ENCODE measurements at regions of chr13 and their contacts with region 1.

Region 1: GRCh38 chr13:104967836-104968630 is 1567.4 kb downstream of the EFNB2 start:
- DNase-seq: no peak
- ATAC-seq: no peak
- H3K4me3 ChIP-seq: no peak overlapping the region
- H3K27ac ChIP-seq: no peak overlapping the region
- H3K4me1 ChIP-seq: no peaks in the 10 kb centered on the region
- H3K27me3 ChIP-seq: no peaks in the 10 kb centered on the region
- CTCF ChIP-seq: no peak
- POLR2A ChIP-seq: no peak
- RAD21 ChIP-seq: no peak

Region 2: DNA sequence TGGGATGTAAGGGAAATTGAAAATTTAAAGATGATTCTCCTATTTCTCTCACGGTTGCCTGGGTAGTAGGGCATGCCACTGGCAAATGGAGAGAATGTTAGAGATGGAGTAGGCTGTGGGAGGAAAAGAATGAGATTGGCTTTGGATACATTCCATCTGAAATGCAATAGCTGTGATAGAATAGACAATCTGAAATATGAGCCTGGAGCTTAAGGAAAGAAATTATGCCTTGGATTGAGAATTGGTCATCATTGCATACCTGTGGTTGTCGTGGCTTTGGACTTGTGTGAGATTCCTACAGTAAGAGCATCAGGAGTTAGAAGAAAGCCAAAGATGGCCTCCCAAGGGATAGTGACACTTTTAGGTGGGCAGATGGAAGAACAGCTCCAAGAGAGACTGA is 1596.8 kb before region 1 on chr13:
- CTCF ChIA-PET with region 1: no interaction called
- POLR2A ChIA-PET with region 1: no interaction called
- dilution Hi-C with region 1: no loop called
- in situ Hi-C with region 1: no loop called
- intact Hi-C with region 1: loop called (anchors 10 kb)
- DNase-seq: no peak
- ATAC-seq: no peak
- H3K4me3 ChIP-seq: no peak overlapping the region
- H3K27ac ChIP-seq: no peak overlapping the region
- H3K4me1 ChIP-seq: no peaks in the 10 kb centered on the region
- H3K27me3 ChIP-seq: no peaks in the 10 kb centered on the region
- CTCF ChIP-seq: no peak
- POLR2A ChIP-seq: no peak
- RAD21 ChIP-seq: no peak

Region 3: DNA sequence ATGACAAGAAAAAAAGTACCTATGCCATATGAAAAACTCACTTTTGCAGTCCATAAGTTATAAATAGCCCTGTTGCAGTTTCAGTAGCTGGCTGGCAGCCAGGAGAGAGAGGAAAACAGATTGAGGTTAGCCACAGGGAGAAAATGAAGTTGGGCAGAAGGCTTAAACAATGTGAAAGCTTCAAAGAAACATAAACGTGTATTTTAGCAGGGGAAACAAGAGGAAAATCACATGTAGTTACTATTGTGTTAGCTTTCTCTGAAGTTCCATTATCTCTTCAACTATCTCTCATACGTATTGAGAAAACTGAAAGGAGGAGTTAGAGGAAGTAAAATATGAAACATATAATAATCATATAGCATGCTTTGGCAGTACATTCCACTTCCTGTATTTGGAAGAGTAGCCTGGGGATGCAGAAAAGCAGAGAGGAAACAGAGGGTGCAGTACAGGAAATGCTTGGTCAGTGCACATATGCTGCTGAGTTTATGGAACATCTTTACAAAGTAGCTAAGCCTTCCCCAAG is 16.3 kb after region 1 on chr13:
- CTCF ChIA-PET with region 1: no interaction called
- POLR2A ChIA-PET with region 1: no interaction called
- dilution Hi-C with region 1: no loop called
- in situ Hi-C with region 1: no loop called
- intact Hi-C with region 1: no loop called
- DNase-seq: peak; percentile 12
- ATAC-seq: no peak
- H3K4me3 ChIP-seq: no peak overlapping the region
- H3K27ac ChIP-seq: no peak overlapping the region
- H3K4me1 ChIP-seq: no peaks in the 10 kb centered on the region
- H3K27me3 ChIP-seq: no peaks in the 10 kb centered on the region
- CTCF ChIP-seq: no peak
- POLR2A ChIP-seq: no peak
- RAD21 ChIP-seq: no peak

Region 4: GRCh38 chr13:105587786-105588185 is 619.8 kb after region 1 on chr13:
- CTCF ChIA-PET with region 1: no interaction called
- POLR2A ChIA-PET with region 1: no interaction called
- dilution Hi-C with region 1: no loop called
- in situ Hi-C with region 1: no loop called
- intact Hi-C with region 1: no loop called
- DNase-seq: peak; percentile 2
- ATAC-seq: no peak
- H3K4me3 ChIP-seq: no peak overlapping the region
- H3K27ac ChIP-seq: no peak overlapping the region
- H3K4me1 ChIP-seq: no peaks in the 10 kb centered on the region
- H3K27me3 ChIP-seq: no peaks in the 10 kb centered on the region
- CTCF ChIP-seq: no peak
- POLR2A ChIP-seq: no peak
- RAD21 ChIP-seq: no peak

Region 5: DNA sequence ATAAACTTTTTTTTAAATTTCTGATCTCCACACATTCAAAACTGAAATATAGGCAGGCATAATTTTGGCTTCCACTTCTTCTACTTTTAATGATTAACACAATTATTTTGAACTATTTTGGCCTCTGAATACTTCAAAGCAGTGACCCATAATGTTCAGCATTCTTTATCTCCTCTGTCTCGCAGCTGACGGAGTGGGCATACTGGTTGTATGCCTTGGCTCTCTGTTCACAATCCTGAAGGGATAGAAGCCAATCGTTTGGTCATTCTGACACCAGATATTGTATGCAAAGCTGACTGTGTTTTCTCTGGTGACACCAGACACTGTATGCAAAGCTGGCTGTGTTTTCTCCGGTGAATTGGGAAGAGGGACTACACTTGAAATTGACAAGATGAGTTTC is 734.4 kb after region 1 on chr13:
- CTCF ChIA-PET with region 1: no interaction called
- POLR2A ChIA-PET with region 1: no interaction called
- dilution Hi-C with region 1: no loop called
- in situ Hi-C with region 1: no loop called
- intact Hi-C with region 1: no loop called
- DNase-seq: no peak
- ATAC-seq: no peak
- H3K4me3 ChIP-seq: no peak overlapping the region
- H3K27ac ChIP-seq: no peak overlapping the region
- H3K4me1 ChIP-seq: no peaks in the 10 kb centered on the region
- H3K27me3 ChIP-seq: no peaks in the 10 kb centered on the region
- CTCF ChIP-seq: no peak
- POLR2A ChIP-seq: no peak
- RAD21 ChIP-seq: no peak

Measured in IMR-90 (cell line).